ENCODE measurements at regions of chr2 and their contacts with region 1.

Region 1: DNA sequence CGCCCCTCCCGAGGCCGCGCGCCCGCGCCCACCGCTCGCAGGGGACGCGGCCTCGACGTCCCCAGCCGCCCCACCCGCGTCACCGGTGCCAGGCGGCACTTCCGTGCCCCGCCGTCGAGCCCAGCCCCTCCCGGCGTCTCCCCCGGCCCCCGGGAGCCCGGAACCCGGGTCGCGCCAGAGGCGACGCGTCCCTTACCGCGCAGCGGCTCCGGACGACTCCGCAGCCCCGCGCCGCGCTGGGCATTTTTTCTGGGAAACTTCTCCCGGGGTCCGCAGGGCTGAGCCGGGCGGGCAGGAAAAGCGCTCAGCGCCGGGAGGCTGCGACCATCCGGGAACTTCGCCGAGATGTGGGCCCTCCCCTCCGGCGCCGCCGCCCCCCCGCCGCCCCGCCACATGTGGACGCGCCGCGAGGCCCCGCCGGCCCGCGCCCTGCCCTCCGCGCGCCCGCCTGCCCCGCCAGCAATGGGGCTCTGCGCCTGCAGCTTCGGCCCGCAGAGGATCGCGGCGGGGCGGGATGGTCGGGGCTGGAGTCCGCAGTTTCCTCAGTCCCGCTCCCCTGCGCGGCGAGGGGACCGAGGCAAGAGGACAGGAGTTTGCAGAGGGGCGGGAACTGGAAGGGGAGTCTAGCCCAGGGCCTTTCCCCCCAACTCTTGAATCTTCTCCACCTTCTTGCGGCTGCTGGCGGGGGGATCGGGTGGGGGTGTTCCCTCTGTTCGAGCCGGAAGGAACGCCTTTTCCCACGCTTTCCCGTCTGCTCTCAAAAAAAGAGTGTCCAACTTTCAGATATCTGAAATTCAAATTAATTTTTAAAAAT is 81.5 kb downstream of the CHRNA1 start:
- DNase-seq: peak; percentile 75
- H3K4me3 Mint-ChIP-seq: peak overlapping the region; percentile 89
- H3K27ac Mint-ChIP-seq: peak overlapping the region; percentile 88
- H3K4me1 Mint-ChIP-seq: peaks cover 54% of the 10 kb centered on the region
- H3K27me3 Mint-ChIP-seq: peaks cover 4% of the 10 kb centered on the region

Region 2: DNA sequence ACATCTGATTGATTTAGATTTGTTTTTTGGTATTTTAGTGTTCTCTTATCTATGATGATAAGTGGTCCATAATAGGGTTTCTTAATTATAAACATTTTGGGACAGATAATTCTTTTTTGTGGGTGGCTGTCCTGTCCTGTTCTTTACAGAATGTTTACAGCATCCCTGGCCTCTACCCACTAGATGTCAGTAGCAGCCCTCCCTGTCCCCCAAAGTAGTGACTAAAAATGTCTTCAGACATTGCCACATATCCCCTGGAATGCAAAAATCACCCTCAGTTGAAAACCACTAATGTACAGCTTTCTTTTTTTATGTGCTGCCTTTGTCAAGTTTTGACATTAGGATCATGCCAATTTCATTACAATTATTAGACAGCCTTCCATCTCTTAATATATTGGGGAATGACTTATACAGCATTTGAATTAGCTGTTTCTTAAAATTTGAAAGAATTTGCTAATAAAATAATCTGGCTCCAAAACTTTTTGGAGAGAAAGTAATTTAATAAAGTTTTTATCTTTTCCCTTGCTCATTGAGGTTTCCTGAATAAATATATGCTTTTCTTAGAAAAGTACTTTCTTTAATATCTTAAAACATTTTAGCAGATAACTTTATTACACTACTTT is 104.7 kb before region 1 on chr2:
- CTCF ChIA-PET with region 1: interaction called, 136 read pairs
- DNase-seq: peak; percentile 74
- H3K4me3 Mint-ChIP-seq: no peak overlapping the region
- H3K27ac Mint-ChIP-seq: peak overlapping the region; percentile 24
- H3K4me1 Mint-ChIP-seq: peaks cover 71% of the 10 kb centered on the region
- H3K27me3 Mint-ChIP-seq: no peaks in the 10 kb centered on the region

Measured in activated naive CD4-positive, alpha-beta T cell treated with anti-CD3 and anti-CD28 coated beads, Interleukin-2, amount 10 ng/mL, durations not matched to agents 7 days and 5 days (primary cell).